ENCODE measurements at regions of chr10 and their contacts with region 1.

Region 1: GRCh38 chr10:613271-614138 is 76.0 kb downstream of the DIP2C start:
- DNase-seq: no peak
- H3K4me3 ChIP-seq: no peak overlapping the region
- CTCF ChIP-seq: no peak

Region 2: DNA sequence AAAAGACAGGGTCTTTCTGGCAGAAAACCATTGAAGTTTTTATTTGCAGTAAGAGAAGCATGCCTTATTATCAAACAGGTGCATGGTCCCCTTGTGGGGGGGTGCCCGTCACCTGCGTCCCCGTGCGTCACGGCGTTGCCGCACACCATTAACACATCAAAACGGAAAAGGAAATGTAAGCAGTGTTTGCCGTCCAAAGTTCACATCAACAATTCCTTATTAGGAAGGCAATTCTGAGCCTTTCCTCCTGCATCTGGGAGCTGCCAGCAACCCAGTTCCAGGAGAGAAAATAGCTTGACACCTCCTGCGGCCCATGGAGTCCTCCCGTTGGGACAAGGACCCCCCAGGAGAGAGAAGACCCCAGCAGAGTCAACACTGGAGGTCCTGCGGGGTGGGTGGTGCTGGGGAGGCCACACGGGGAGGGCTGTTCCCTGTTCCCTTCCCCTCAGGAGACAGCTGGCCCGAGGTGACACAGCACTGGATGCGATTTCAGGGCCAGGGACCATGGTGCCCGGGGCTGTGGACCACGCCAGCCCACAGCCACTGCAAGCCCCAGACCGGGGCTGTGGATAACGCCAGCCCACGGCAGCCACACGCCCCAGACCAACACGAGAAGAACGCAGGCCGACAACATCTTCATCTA is 36.4 kb after region 1 on chr10:
- in situ Hi-C with region 1: loop called (anchors 5 kb)
- DNase-seq: no peak
- H3K4me3 ChIP-seq: no peak overlapping the region
- CTCF ChIP-seq: no peak

Region 3: DNA sequence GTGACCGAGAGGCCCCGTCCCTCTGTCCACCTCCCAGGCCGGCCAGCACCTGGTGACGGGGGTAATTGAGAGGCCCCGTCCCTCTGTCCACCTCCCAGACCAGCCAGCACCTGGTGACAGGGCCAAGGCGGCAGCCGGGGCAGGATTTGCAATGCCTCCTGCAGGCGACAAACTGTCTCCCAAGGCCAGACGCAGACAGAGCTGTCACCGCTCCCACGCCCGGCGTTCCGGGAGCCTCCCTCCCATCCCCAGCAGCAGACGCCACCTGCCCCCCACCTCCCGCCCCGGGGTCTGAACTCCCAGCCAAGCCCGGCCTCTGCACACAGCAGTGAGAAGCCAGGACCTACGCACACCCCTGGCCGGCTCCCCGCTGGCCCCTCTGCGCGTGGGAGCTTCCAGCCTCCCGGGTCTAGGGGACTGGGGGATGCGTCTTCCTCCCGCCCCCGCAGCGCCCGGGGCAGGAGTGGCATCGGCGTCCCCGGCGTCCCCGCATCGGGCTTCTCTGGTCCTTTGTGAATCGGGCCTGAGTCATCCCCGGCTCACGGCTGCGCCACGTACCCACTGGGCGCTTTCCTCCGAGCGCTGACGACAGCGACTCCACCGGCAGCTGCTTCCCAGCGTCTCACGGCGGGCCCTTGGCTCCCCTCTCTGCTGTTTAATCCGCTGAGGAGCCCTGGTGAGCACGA is 171.0 kb after region 1 on chr10:
- in situ Hi-C with region 1: no loop called
- DNase-seq: peak; percentile 20
- H3K4me3 ChIP-seq: peak overlapping the region; percentile 34
- CTCF ChIP-seq: peak; percentile 12